Breast epithelium (tissue), 4 donors: ENCODE measurements at regions of chr15 and their contacts with region 1.

Region 1: DNA sequence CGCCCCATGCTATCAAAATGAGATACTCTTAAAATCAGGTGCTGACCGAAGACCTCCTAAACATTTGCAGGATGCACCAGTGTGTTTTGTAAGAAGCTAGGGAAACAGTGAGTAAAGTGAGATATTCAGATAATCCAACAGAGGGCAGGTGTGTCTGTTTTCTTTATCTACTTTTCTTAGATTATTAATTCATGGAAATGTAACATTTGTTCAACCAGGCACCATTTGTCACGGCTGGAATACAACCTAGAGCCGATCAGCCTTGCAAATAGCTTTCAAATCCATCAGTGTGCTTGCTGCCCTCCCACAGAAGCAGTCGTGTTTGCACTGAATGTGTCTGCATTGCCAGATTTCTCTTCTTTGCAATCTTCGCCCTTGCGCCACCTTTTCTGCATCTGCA is 201.9 kb upstream of the CHRM5 start:
- DNase-seq: no peak
- H3K4me3 ChIP-seq: no peak overlapping the region
- H3K27ac ChIP-seq: no peak overlapping the region
- H3K4me1 ChIP-seq: no peaks in the 10 kb centered on the region
- H3K27me3 ChIP-seq: no peaks in the 10 kb centered on the region
- CTCF ChIP-seq: no peak
- POLR2A ChIP-seq: no peak

Region 2: GRCh38 chr15:32933236-32933635 is 833.2 kb before region 1 on chr15:
- intact Hi-C with region 1: loop called (anchors 5 kb)
- DNase-seq: no peak
- H3K4me3 ChIP-seq: no peak overlapping the region
- H3K27ac ChIP-seq: no peak overlapping the region
- H3K4me1 ChIP-seq: no peaks in the 10 kb centered on the region
- H3K27me3 ChIP-seq: no peaks in the 10 kb centered on the region
- CTCF ChIP-seq: no peak
- POLR2A ChIP-seq: no peak

Region 3: GRCh38 chr15:33788906-33789540 is 22.6 kb after region 1 on chr15:
- intact Hi-C with region 1: no loop called
- DNase-seq: no peak
- H3K4me3 ChIP-seq: no peak overlapping the region
- H3K27ac ChIP-seq: no peak overlapping the region
- H3K4me1 ChIP-seq: no peaks in the 10 kb centered on the region
- H3K27me3 ChIP-seq: no peaks in the 10 kb centered on the region
- CTCF ChIP-seq: no peak
- POLR2A ChIP-seq: no peak

Region 4: DNA sequence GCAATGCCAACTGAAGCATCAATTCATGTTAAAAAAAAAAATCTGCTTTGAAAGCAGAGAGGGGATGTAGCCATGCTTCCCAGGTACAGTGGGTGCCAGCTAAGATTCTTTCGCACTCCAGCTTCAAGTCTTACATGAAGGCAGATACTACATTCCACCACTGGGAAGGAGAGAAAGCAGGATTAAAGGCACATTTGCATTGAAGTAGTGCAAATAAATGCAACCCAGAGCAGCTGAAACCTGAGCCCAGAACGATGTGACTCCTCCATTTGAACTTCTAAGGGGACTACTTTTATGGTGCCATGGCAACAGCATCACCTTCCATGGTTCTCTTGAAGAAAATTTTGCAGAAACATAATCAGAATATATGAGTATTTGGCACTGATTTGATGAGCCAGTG is 1007.5 kb after region 1 on chr15:
- intact Hi-C with region 1: no loop called
- DNase-seq: no peak
- H3K4me3 ChIP-seq: no peak overlapping the region
- H3K27ac ChIP-seq: no peak overlapping the region
- H3K4me1 ChIP-seq: no peaks in the 10 kb centered on the region
- H3K27me3 ChIP-seq: no peaks in the 10 kb centered on the region
- CTCF ChIP-seq: no peak
- POLR2A ChIP-seq: no peak